HEK293 (cell line): ENCODE measurements at regions of chr14 and their contacts with region 1.

Region 1: GRCh38 chr14:32259368-32260013 is 56.4 kb upstream of the RNU6-8 start:
- H3K4me3 ChIP-seq: no peak overlapping the region
- H3K27ac ChIP-seq: no peak overlapping the region
- H3K4me1 ChIP-seq: peaks cover 5% of the 10 kb centered on the region
- CTCF ChIP-seq: no peak

Region 2: GRCh38 chr14:32434180-32434579 is 174.7 kb after region 1 on chr14:
- CTCF ChIA-PET with region 1: no interaction called
- POLR2A ChIA-PET with region 1: no interaction called
- H3K4me3 ChIP-seq: no peak overlapping the region
- H3K27ac ChIP-seq: no peak overlapping the region
- H3K4me1 ChIP-seq: no peaks in the 10 kb centered on the region
- CTCF ChIP-seq: no peak

Region 3: DNA sequence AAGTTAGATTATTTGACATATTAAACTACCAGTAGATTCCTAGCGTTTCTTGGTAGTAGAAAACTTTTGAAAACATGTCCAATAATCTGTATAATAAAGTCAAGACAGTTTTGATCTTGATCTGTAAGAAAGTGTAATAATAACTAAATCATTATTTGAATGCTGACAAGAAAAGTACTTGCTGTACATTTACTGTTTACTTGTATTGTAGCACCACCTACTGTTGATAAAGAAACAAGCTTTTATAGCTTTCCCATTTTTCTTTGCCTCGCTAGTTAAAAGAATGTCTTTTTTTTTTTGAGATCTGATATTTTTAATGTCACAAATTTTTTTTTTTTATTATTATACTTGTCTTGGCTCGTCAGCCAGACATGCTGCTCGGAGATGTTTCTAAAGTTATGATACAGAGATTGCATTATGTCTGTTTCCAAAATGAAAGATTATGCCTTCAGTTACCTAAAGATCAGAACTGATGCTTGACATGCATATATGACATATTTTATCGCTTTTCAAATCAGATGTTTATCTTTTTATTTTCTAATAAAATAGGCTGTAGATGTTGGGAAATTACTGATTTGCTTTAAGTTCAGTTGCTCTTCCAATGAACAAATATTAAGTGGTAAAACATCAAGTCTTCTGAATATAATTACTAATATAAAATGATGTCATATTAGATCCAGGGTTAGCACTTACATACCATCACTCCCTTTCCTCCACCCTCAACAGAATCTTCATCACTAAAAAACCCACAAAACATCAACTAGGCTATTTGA is 210.1 kb after region 1 on chr14:
- CTCF ChIA-PET with region 1: interaction called, 24 read pairs
- POLR2A ChIA-PET with region 1: no interaction called
- H3K4me3 ChIP-seq: no peak overlapping the region
- H3K27ac ChIP-seq: no peak overlapping the region
- H3K4me1 ChIP-seq: 0 out of 2 replicates have a peak, but pooled peaks cover 2% of the 10 kb centered on the region
- CTCF ChIP-seq: peak; percentile 51; the same call in 1 of the 2 replicates

Region 4: GRCh38 chr14:32560209-32560857 is 300.8 kb after region 1 on chr14:
- CTCF ChIA-PET with region 1: interaction called, 20 read pairs
- POLR2A ChIA-PET with region 1: no interaction called
- H3K4me3 ChIP-seq: no peak overlapping the region
- H3K27ac ChIP-seq: no peak overlapping the region
- H3K4me1 ChIP-seq: peaks cover 4% of the 10 kb centered on the region; the same call in 1 of the 2 replicates
- CTCF ChIP-seq: peak; percentile 72; the same call in 1 of the 2 replicates